ENCODE measurements at regions of chr6 and their contacts with region 1.

Region 1: GRCh38 chr6:34459899-34460593 is 5.8 kb upstream of the PACSIN1 start:
- DNase-seq: peak; percentile 78
- H3K4me3 Mint-ChIP-seq: no peak overlapping the region
- H3K27ac Mint-ChIP-seq: no peak overlapping the region
- H3K4me1 Mint-ChIP-seq: peaks cover 15% of the 10 kb centered on the region
- H3K27me3 Mint-ChIP-seq: peaks cover 35% of the 10 kb centered on the region
- CTCF ChIP-seq: peak; percentile 92

Region 2: DNA sequence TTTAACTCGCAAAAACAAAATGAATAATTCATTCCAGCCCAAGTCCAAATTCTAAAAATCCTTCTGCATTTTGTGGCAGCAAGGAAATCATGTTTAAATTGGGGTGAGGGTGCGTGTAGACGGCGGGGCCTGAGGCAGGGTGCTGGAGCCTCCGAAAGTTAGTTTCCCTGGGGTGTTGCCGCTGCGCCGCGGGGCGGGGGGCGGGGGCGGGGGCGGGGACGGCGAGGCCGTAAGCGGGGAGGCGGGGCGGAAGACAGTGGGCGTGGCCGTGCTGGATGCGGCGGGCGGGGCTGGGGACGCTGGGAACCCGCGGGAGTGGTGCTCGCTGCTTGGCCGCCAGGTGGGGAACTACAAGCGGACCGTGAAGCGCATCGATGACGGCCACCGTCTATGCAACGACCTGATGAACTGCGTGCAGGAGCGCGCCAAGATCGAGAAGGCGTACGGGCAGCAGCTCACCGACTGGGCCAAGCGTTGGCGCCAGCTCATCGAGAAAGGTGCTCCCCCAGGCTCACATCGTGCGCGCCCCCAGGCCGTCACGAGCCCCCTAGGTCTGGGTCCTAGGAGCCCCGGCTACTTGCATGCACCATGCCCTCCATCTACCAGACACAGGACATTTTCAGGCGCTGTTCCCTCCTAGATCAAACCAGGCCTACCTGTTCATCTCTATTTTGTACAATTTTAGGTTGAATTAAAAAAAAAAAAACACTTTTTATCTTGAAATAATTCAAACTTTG is 67.1 kb after region 1 on chr6:
- CTCF ChIA-PET with region 1: interaction called, 5 read pairs
- intact Hi-C with region 1: loop called (anchors 5 kb)
- DNase-seq: peak; percentile 100
- H3K4me3 Mint-ChIP-seq: peak overlapping the region; percentile 22
- H3K27ac Mint-ChIP-seq: no peak overlapping the region
- H3K4me1 Mint-ChIP-seq: peaks cover 21% of the 10 kb centered on the region
- H3K27me3 Mint-ChIP-seq: peaks cover 17% of the 10 kb centered on the region
- CTCF ChIP-seq: peak; percentile 87

Region 3: DNA sequence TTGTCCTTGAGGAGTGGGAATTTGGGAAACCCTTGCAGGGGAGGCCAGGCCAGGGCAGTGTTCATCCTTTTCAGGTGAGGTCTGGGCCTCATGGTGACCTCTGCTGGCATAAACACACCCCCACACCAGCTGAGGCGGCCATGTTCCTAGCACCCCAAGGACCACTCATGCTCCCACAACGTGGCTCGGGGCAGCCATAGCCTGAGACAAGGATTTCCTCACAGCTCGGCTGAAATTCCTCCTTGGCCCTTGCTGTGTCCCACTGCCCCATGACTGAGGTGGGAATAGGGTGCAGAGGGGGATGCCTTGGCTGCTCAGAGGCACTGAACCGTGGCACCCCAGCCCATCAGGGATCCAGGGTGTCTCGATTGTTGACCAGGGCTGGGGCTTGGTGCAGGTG is 123.4 kb after region 1 on chr6:
- CTCF ChIA-PET with region 1: interaction called, 3 read pairs
- intact Hi-C with region 1: loop called (anchors 1 kb)
- DNase-seq: peak; percentile 54
- H3K4me3 Mint-ChIP-seq: no peak overlapping the region
- H3K27ac Mint-ChIP-seq: no peak overlapping the region
- H3K4me1 Mint-ChIP-seq: peaks cover 13% of the 10 kb centered on the region
- H3K27me3 Mint-ChIP-seq: no peaks in the 10 kb centered on the region
- CTCF ChIP-seq: peak; percentile 59

Region 4: GRCh38 chr6:34610819-34611477 is 150.9 kb after region 1 on chr6:
- CTCF ChIA-PET with region 1: interaction called, 74 read pairs
- intact Hi-C with region 1: loop called (anchors 1 kb)
- DNase-seq: peak; percentile 60
- H3K4me3 Mint-ChIP-seq: no peak overlapping the region
- H3K27ac Mint-ChIP-seq: peak overlapping the region; percentile 91
- H3K4me1 Mint-ChIP-seq: peaks cover 31% of the 10 kb centered on the region
- H3K27me3 Mint-ChIP-seq: no peaks in the 10 kb centered on the region
- CTCF ChIP-seq: no peak

Measured in Calu3 (cell line).